K562 (cell line): ENCODE measurements at regions of chr6 and their contacts with region 1.

Region 1: DNA sequence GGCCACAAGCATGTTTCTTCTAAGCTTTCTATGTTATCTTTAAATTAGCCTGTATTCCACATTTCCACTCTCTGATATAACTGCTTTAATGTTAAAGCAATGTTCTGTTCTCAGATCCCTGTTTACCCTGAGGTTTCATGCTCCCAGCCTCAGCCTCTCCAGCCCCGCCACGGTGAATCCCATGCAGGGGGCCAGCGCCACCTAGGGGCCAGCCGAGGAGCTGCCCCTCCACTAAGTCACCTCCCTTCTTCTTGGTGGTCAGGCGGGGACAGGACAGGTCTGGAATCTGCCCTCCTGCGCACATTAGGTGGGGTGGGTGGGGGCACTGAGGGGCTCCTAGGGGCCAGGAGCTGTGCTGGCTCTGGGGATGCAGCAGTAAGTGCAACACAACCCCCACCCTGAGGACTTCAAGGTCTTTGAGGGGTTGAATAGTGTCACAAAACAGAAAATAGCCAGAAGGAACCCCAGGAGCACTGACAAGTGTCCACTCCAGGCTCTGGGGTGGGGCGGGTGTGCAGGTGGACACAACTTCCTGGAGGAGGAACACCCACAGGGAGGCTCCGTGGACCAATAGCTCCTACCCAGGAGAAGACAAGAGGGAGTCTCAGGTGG is 61.6 kb downstream of the RAB44 start:
- DNase-seq: peak; percentile 88 to 94 (median 94)
- ATAC-seq: peak; percentile 96
- H3K4me3 ChIP-seq: peak overlapping the region; percentile 7; the same call in 1 of the 2 replicates
- H3K27ac ChIP-seq: no peak overlapping the region
- H3K4me1 ChIP-seq: peaks cover 0 to 5% of the 10 kb centered on the region in 2 experiments; a peak in 3 of 5 replicates
- H3K27me3 ChIP-seq: peaks cover 25 to 46% of the 10 kb centered on the region in 2 experiments; a peak in 4 of 5 replicates
- CTCF ChIP-seq: peak; percentile 97 to 99 (median 98)
- EP300 ChIP-seq: no peak; the same call in 1 of the 2 replicates
- POLR2A ChIP-seq: no peak
- RAD21 ChIP-seq: peak; percentile 91 to 96

Region 2: GRCh38 chr6:36605560-36606391 is 153.5 kb before region 1 on chr6:
- CTCF ChIA-PET with region 1: no interaction called
- POLR2A ChIA-PET with region 1: interaction called, 16 read pairs
- in situ Hi-C with region 1: no loop called
- intact Hi-C with region 1: no loop called
- DNase-seq: no peak
- ATAC-seq: peak; percentile 21
- H3K4me3 ChIP-seq: no peak overlapping the region
- H3K27ac ChIP-seq: peak overlapping the region; percentile 3; the same call in 1 of the 3 replicates
- H3K4me1 ChIP-seq: no peaks in the 10 kb centered on the region; a peak in 1 of 5 replicates
- H3K27me3 ChIP-seq: no peaks in the 10 kb centered on the region
- CTCF ChIP-seq: no peak
- EP300 ChIP-seq: no peak
- POLR2A ChIP-seq: peak; percentile 42
- RAD21 ChIP-seq: no peak

Region 3: GRCh38 chr6:36623547-36624459 is 135.5 kb before region 1 on chr6:
- CTCF ChIA-PET with region 1: interaction called, 13 read pairs
- POLR2A ChIA-PET with region 1: interaction called, 3 read pairs
- in situ Hi-C with region 1: loop called (anchors 10 kb)
- intact Hi-C with region 1: loop called (anchors 2 kb)
- DNase-seq: peak; percentile 86 to 91 (median 88)
- ATAC-seq: peak; percentile 95
- H3K4me3 ChIP-seq: no peak overlapping the region
- H3K27ac ChIP-seq: no peak overlapping the region
- H3K4me1 ChIP-seq: peaks cover 0 to 4% of the 10 kb centered on the region in 2 experiments; a peak in 2 of 5 replicates
- H3K27me3 ChIP-seq: peaks cover 2 to 23% of the 10 kb centered on the region in 2 experiments; a peak in 3 of 5 replicates
- CTCF ChIP-seq: peak; percentile 95 to 97 (median 97)
- EP300 ChIP-seq: no peak
- POLR2A ChIP-seq: no peak
- RAD21 ChIP-seq: peak; percentile 97 to 99

Region 4: DNA sequence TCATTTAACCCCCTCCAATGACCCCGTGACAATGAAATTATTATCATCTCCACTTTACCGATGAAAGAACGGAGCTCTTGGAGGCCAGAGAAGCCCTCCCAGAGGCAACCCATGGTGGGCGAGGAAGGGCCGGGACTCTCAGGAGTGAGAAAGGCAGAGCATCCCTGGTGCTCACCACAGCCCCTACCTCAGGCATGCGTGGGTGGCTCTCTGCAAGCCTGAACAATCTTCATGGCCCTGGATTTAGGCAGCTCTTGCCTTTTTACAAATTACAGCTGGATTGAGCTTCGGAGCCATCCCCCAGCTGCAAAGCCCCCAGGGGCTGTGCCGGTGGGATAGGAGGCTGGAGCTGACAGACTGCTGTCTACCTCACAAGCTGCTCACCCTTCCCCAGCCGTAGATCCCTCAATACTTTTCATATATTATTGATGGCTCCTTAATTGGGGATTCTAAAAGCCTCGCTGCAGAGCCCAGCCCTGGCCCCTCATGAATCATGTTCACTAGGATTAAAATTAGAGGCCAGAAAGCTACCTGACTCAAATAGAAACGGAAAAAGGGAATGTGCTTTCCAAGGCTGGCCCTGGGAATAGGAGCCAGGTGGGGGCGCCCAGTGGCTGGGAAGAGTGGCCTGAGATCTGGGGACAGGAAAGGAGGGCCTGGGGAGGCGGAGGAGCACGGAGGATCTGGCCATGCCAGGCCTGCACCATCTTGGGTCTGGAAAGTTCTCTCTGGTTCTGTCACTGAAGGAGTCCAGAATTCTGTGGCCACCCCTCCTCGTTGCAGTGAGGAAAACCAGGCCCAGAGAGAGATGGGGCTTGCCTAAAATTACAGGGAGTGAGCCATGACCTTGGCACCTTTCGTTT is 50.9 kb after region 1 on chr6:
- CTCF ChIA-PET with region 1: no interaction called
- POLR2A ChIA-PET with region 1: no interaction called
- in situ Hi-C with region 1: no loop called
- intact Hi-C with region 1: no loop called
- DNase-seq: peak in 1 of 4 experiments; percentile 42
- ATAC-seq: peak; percentile 51
- H3K4me3 ChIP-seq: no peak overlapping the region
- H3K27ac ChIP-seq: no peak overlapping the region
- H3K4me1 ChIP-seq: no peaks in the 10 kb centered on the region; a peak in 2 of 5 replicates
- H3K27me3 ChIP-seq: peaks cover 0 to 12% of the 10 kb centered on the region in 2 experiments; a peak in 3 of 5 replicates
- CTCF ChIP-seq: peak; percentile 35 to 78 (median 58); a peak in 4 of 6 replicates
- EP300 ChIP-seq: no peak
- POLR2A ChIP-seq: no peak
- RAD21 ChIP-seq: peak; percentile 80 to 91